Activated CD4-positive, alpha-beta T cell treated with anti-CD3 and anti-CD28 coated beads for 36 hours (primary cell): ENCODE measurements at regions of chr12 and their contacts with region 1.

Region 1: DNA sequence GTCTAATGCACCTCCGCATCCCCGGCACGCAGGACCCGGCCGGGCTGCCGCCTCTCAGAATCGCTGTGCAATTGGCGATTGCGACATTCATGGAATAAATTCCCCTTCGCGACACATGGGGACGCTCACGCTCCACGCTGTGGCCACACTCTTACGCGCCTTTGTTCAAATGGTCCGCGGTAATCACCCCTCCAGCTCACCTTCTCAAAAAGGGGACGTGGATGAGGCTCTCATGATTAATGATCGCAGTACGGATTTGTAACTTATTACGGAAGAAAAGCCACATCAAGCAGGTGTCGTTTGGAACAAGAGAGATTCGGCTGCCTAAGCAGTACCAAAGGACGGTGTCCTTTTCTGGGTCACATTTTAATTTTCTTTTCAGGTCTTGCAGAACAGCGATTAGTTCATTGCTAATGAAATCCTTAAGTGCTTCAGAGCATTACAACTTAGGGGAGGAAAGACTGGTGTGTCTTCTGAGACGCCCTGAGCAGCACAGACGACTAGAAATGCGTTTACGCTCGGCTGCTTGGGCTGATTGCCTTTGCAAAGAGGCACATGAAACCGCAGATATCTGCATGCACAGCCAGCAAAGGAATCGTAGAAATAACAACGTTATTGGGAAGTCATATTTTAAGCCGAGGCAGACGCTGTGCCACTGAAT is 37.3 kb upstream of the ADGRD1 start:
- DNase-seq: peak; percentile 58
- ATAC-seq: peak; percentile 73
- H3K4me3 Mint-ChIP-seq: no peak overlapping the region
- H3K27ac Mint-ChIP-seq: no peak overlapping the region
- H3K4me1 Mint-ChIP-seq: no peaks in the 10 kb centered on the region
- H3K27me3 Mint-ChIP-seq: peaks cover 48% of the 10 kb centered on the region

Region 2: GRCh38 chr12:130686511-130686991 is 229.8 kb before region 1 on chr12:
- CTCF ChIA-PET with region 1: no interaction called
- POLR2A ChIA-PET with region 1: no interaction called
- intact Hi-C with region 1: no loop called
- DNase-seq: no peak
- ATAC-seq: no peak
- H3K4me3 Mint-ChIP-seq: no peak overlapping the region
- H3K27ac Mint-ChIP-seq: no peak overlapping the region
- H3K4me1 Mint-ChIP-seq: no peaks in the 10 kb centered on the region
- H3K27me3 Mint-ChIP-seq: peaks cover 9% of the 10 kb centered on the region

Region 3: DNA sequence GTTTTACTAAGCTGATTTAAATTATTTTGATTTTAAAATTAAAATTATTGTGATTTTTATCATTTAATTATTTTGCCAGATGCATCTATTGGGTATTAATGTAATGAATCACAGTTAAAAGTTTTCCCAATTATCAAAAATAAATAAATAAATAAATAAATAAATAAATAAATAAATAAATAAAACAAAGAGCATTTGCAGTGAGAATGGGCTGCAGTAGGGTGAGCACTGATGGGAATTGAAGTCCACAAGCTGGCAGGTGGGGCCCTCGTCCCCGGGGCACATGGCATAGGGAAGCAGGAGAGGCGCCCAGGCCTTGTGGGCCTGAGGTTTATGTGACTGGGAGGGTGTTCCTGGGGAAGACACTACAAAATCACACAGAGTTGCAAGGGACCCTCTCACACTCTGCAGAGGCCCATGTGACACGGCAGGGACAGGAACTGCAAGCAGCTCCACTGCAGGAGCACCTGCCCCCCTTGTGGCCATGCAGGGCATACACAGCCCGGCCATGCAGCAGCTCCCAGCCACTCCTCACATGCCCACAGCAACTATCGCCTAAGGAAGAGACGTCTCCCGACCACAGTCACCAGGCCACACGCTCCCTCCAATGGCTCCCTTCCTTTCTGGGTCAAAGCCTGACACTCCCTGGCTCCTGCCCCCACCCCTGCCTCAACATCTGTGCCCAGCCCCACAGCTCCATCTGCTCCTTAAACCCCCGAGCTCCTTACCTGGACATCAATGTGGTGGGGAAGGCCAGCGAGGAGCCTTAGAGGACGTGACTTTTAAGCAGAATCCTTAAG is 538.2 kb after region 1 on chr12:
- CTCF ChIA-PET with region 1: interaction called, 3 read pairs
- POLR2A ChIA-PET with region 1: no interaction called
- intact Hi-C with region 1: loop called in 1 of 2 experiments (anchors 2 kb)
- DNase-seq: peak; percentile 81
- ATAC-seq: peak; percentile 99
- H3K4me3 Mint-ChIP-seq: no peak overlapping the region
- H3K27ac Mint-ChIP-seq: no peak overlapping the region
- H3K4me1 Mint-ChIP-seq: peaks cover 2% of the 10 kb centered on the region
- H3K27me3 Mint-ChIP-seq: peaks cover 5% of the 10 kb centered on the region